Transverse colon (tissue), 4 donors: ENCODE measurements at regions of chr5 and their contacts with region 1.

Region 1: DNA sequence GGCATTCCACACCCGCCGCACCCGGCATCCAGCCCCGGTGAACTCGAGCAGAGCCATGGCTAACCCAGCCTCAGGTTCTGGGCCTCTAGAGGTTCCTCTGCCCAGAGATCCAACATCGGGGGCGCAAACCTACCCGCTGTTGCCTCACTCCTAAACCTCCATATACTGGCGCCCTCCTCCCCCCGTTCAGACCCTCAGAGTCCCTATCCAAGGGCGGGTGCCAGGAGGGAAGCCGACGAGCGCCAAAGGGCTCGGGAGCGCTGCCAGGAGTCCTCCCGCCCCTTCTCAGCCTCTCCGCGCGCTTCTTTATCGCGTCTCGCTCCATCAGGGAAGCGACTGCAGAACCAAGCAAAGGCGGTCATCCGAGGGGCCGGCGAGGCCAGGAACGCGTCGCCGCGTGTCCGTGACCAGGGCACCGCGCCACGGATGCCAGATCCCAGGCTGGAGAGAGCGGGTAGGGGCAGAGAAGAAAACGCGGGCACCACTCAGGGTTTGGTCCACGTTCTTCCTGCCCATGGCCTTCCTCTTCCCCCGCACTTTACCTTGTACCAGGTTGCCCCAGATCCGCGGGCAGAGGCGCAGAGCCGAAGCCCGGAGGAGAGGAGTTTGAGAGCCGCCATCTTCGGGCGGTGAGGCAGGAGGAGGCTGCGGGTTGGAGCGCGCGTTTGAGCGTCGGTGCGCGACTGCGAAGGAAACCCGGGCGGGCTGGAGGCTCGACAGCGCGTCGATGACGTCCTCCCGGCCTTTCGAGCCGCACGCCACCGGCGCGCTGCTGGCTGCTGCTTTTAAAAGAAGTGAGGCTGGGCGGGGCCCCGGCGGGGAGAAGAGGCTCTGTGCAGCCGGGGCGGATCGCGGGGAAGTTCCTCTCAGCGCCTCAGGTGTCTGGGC is at the start of gene OXCT1:
- DNase-seq: peak; percentile 89
- H3K4me3 ChIP-seq: peak within 1 kb of the TSS; percentile 42 to 89 (median 53)
- H3K27ac ChIP-seq: peak within 1 kb of the TSS; percentile 86 to 91 (median 88)
- H3K4me1 ChIP-seq: peaks cover 4 to 24% (median 16%) of the 10 kb centered on the region in 4 donors
- H3K27me3 ChIP-seq: no peaks in the 10 kb centered on the region
- CTCF ChIP-seq: peak in 2 of 5 experiments; percentile 7 to 12
- EP300 ChIP-seq: no peak
- POLR2A ChIP-seq: peak; percentile 89
- total RNA-seq, gene OXCT1: 7.4 to 12.7 (median 8.4) TPM

Region 2: DNA sequence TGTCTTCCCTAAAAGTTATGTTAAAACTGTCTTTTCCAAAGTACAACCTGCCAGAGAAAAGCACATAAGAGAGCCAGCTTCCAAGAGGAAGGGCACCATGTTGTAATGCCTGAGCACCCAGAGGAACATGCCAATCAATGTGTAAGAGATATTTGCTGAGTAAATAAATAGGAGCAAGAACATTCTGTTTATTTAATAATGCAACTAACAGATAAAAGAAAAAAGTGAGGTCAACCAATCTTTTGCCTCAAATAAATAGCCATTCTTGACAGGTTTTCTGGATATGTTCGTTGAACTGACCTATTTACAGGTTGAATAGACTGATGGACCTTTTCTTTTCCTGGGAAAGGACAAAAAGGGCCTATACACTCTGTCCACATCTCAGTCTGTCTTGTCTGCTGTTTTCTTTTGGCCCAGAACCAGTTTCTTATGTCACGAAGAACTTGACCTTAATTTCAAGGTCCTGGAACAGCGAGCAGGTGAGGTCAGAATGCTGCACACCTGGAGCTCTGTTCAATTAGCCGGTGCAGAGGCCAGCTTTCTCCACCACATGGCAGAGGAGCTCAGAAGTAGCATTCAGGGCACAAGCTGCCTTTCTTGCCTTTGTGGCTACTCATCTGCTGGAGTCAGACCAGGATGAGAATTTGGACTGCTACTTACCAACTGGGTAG is 437.3 kb before region 1 on chr5:
- in situ Hi-C with region 1: no loop called
- intact Hi-C with region 1: no loop called
- DNase-seq: no peak
- H3K4me3 ChIP-seq: no peak overlapping the region
- H3K27ac ChIP-seq: no peak overlapping the region
- H3K4me1 ChIP-seq: no peaks in the 10 kb centered on the region
- H3K27me3 ChIP-seq: no peaks in the 10 kb centered on the region
- CTCF ChIP-seq: no peak
- EP300 ChIP-seq: no peak
- POLR2A ChIP-seq: no peak

Region 3: DNA sequence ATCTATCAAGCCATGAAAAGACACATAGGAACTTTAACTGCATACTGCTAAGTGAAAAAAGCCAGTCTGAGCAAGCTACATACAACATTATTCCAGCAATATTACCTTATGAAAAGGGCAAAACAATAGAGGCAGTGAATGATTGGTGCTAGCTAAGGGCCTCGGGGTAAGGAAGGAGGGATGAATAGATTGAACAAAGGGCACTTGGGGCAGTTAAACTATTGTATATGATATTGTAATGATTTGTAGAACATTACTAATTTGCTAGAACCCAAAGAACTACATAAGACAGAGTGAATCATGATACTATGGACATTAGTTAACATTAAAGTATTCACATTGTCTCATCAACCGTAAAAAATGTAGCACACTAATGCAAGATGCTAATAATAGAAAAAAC is 273.4 kb after region 1 on chr5:
- in situ Hi-C with region 1: no loop called
- intact Hi-C with region 1: no loop called
- DNase-seq: no peak
- H3K4me3 ChIP-seq: no peak overlapping the region
- H3K27ac ChIP-seq: no peak overlapping the region
- H3K4me1 ChIP-seq: no peaks in the 10 kb centered on the region
- H3K27me3 ChIP-seq: no peaks in the 10 kb centered on the region
- CTCF ChIP-seq: no peak
- EP300 ChIP-seq: no peak
- POLR2A ChIP-seq: no peak

Region 4: GRCh38 chr5:42811591-42812446 is 941.8 kb after region 1 on chr5 and contains the start of gene SELENOP:
- in situ Hi-C with region 1: no loop called
- intact Hi-C with region 1: loop called (anchors 5 kb)
- DNase-seq: peak; percentile 73
- H3K4me3 ChIP-seq: peak within 1 kb of the TSS; percentile 23 to 63 (median 33)
- H3K27ac ChIP-seq: peak within 1 kb of the TSS; percentile 77 to 86 (median 79)
- H3K4me1 ChIP-seq: peaks cover 0 to 40% (median 3%) of the 10 kb centered on the region in 4 donors
- H3K27me3 ChIP-seq: no peaks in the 10 kb centered on the region
- CTCF ChIP-seq: no peak
- EP300 ChIP-seq: no peak
- POLR2A ChIP-seq: peak; percentile 96
- total RNA-seq, gene SELENOP: 129 to 1,504 (median 872) TPM

Region 5: GRCh38 chr5:42889311-42889933 is 1019.4 kb after region 1 on chr5:
- in situ Hi-C with region 1: loop called in 2 of 4 experiments (anchors 25 kb)
- intact Hi-C with region 1: no loop called
- DNase-seq: peak; percentile 89
- H3K4me3 ChIP-seq: no peak overlapping the region
- H3K27ac ChIP-seq: no peak overlapping the region
- H3K4me1 ChIP-seq: peaks cover 0 to 9% (median 4%) of the 10 kb centered on the region in 4 donors
- H3K27me3 ChIP-seq: no peaks in the 10 kb centered on the region
- CTCF ChIP-seq: peak; percentile 84 to 89 (median 87)
- EP300 ChIP-seq: no peak
- POLR2A ChIP-seq: no peak